ENCODE measurements at regions of chr11 and their contacts with region 1.

Region 1: DNA sequence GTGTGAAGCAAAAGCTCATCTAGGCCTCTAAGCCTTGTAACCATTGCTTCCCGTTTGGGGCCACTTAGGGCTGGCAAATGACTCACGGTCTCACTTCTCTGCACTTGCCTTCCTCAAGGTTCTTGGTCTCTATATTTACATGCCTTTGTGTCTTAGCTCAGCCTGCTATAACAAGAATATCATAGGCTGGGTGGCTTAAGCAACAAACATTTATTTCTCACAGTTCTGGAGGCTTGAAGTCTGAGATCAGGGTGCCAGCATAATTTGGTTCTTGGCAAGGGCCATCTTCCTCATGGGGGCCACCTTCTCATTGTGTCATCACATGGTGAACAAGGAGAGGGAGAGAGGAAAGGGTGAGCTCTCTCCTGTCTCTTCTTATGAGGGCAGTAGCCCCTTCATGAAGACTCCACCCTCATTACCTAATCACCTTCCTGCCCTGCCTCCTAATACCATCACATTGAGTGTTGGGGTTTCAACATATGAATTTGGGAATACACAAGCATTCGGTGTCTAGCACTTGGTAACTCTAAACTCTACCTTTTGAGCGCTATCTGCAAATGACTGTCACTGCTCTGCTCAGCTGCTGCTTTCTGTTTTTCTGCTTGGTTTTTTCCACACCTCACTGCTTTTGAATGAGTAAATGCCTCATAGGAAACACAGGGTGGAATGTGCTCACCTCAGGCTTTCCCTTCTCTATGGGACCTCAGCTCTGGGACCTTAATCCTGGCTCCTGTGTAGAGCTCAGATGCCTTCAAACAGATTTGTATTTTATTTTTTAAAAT is 16.2 kb upstream of the ME3 start:
- DNase-seq: no peak
- H3K4me3 Mint-ChIP-seq: peak overlapping the region; percentile 61
- H3K27ac Mint-ChIP-seq: peak overlapping the region; percentile 92
- H3K4me1 Mint-ChIP-seq: peaks cover 24% of the 10 kb centered on the region
- H3K27me3 Mint-ChIP-seq: peaks cover 6% of the 10 kb centered on the region

Region 2: DNA sequence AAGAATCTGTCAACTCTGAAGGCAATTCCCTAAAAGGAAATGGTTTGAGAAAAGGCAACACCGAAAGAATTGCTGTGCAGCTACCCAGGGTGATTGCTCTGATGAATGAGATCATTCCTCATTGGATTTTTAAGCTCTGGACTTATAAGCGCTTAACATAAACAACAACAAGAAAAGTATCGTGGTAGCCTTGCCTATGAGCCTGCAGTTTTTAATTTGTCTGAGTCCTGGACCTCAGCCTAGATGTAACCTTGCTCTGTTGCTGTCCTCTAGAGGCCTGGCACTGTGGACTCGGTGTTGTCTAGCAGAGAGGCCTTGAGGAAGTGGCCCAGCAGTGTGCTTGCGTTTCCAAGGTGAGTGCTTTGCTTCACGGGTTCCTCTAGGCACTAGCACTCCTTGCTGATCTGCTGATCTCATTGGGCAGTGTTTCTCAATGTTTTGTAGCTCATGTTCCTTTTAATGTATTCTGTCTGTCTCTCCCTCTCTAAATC is 293.5 kb before region 1 on chr11:
- intact Hi-C with region 1: no loop called
- DNase-seq: no peak
- H3K4me3 Mint-ChIP-seq: no peak overlapping the region
- H3K27ac Mint-ChIP-seq: no peak overlapping the region
- H3K4me1 Mint-ChIP-seq: peaks cover 3% of the 10 kb centered on the region
- H3K27me3 Mint-ChIP-seq: no peaks in the 10 kb centered on the region

Region 3: DNA sequence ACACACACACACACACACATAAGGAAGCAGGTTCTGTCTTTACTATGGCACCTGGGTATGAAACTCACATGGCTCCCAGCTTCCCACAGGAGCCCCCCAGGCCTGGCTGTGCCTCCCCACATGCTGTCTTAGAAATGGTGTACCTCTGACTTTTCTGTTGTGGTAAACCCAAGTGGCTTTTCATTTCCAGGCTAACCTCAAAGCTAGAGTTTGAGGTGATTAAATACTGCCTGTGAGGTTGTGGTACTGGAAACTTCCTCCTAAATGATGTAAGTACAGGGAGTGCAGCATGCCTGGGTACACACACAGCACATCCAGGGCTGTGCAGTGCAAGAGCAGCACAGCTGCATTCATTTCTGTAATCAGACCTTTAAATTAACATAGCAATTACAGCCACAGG is 50.6 kb before region 1 on chr11:
- intact Hi-C with region 1: loop called (anchors 5 kb)
- DNase-seq: no peak
- H3K4me3 Mint-ChIP-seq: no peak overlapping the region
- H3K27ac Mint-ChIP-seq: no peak overlapping the region
- H3K4me1 Mint-ChIP-seq: peaks cover 21% of the 10 kb centered on the region
- H3K27me3 Mint-ChIP-seq: peaks cover 41% of the 10 kb centered on the region

Region 4: DNA sequence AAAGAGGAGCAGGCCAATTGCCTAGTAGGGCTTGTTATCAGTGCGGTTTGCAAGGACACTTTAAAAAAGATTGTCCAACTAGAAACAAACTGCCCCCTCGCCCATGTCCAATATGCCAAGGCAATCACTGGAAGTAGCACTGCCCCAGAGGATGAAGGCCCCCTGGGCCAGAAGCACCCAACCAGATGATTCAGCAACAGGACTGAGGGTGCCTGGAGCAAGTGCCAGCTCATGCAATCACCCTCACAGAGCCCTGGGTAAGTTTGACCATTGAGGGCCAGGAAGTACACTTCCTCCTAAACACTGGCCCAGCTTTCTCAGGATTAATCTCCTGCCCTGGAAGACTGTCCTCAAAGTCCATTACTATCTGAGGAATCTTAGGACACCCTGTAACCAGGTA is 160.3 kb after region 1 on chr11:
- intact Hi-C with region 1: no loop called
- DNase-seq: no peak
- H3K4me3 Mint-ChIP-seq: no peak overlapping the region
- H3K27ac Mint-ChIP-seq: no peak overlapping the region
- H3K4me1 Mint-ChIP-seq: no peaks in the 10 kb centered on the region
- H3K27me3 Mint-ChIP-seq: peaks cover 2% of the 10 kb centered on the region

Measured in activated T-helper 2 cell treated with anti-CD3 and anti-CD28 coated beads, Interferon-gamma antibody, Interleukin-2, Interleukin-4, amounts not matched to agents 10 μg/mL and 5 μg/mL and 100 μg/mL, durations not matched to agents 14 hours and 24 hours and 36 hours (primary cell).